Caco-2 (cell line): ENCODE measurements at regions of chr9 and their contacts with region 1.

Region 1: DNA sequence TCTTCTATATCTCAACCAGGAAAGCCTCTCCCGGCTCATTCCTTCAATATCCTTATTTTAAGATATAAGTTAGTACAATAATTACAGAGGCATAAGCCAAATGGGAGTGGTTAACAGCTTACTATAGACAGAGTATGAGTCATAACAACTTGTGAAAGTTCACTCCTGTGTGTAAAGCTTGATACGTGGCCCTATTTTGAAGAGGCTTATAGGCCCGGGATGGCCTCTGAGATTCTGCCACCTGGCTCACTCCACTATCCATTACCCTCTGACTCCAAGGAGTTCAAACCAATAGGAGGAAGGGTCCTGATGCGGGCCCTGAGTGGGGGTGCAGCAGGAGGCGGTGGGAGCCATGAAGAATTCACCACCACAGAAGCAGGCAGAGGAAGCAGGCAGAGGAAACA is 36.6 kb downstream of the B4GALT1 start:
- DNase-seq: no peak
- H3K4me3 ChIP-seq: no peak overlapping the region
- H3K4me3 Mint-ChIP-seq: peak overlapping the region; percentile 50
- H3K27ac Mint-ChIP-seq: peak overlapping the region; percentile 97
- H3K4me1 ChIP-seq: peaks cover 68% of the 10 kb centered on the region
- H3K4me1 Mint-ChIP-seq: peaks cover 59% of the 10 kb centered on the region
- H3K27me3 ChIP-seq: no peaks in the 10 kb centered on the region
- H3K27me3 Mint-ChIP-seq: no peaks in the 10 kb centered on the region
- CTCF ChIP-seq: no peak

Region 2: DNA sequence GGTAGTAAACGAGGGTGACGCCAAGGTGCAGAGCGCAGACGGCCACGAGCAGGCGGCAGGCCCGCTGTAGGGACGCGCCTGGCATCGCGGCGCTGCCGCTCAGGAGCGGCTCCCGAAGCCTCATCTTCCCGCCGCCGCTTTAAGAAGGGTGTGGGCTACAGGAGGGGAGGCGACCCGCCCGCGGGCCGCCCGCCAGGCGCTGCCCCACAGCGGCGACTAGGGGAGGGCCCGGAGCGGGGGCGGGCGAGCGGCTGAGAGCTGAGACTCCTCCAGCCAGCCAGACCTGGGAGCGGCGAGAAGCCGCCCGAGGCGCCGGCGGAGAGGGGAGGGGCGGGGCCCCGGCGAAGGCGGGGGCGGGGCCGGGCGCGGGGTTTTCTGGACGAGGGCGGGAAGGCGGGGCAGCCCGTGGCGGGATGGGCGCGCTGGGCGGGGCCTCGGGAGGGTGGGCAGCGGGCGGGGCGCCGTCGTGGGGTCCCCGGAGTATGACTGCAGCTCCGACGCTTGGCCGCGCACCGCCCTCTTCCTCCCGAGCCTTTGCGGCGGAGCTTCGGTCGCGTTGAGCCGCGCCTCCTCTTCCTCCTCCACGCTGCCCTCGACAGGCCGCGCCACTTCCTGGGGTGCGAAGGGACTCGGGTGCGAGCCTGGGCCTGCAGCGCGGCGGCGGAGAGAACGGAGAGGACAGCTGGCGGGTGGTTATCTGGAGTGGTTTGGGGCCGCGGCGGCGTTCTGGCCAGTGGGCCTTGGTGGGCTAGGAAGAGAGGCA is 36.7 kb after region 1 on chr9 and contains the start of gene B4GALT1:
- CTCF ChIA-PET with region 1: interaction called, 5 read pairs
- POLR2A ChIA-PET with region 1: interaction called, 8 read pairs
- intact Hi-C with region 1: loop called (anchors 1 kb)
- DNase-seq: peak; percentile 95 to 97
- H3K4me3 ChIP-seq: peak within 1 kb of the TSS; percentile 91
- H3K4me3 Mint-ChIP-seq: peak within 1 kb of the TSS; percentile 89
- H3K27ac Mint-ChIP-seq: peak within 1 kb of the TSS; percentile 98
- H3K4me1 ChIP-seq: peaks cover 64% of the 10 kb centered on the region
- H3K4me1 Mint-ChIP-seq: peaks cover 66% of the 10 kb centered on the region
- H3K27me3 ChIP-seq: no peaks in the 10 kb centered on the region
- H3K27me3 Mint-ChIP-seq: no peaks in the 10 kb centered on the region
- CTCF ChIP-seq: peak in 1 of 2 experiments; percentile 13
- total RNA-seq, gene B4GALT1: 104 and 121 TPM in 2 replicates

Region 3: GRCh38 chr9:33172256-33173238 is 42.0 kb after region 1 on chr9:
- CTCF ChIA-PET with region 1: interaction called, 5 read pairs
- POLR2A ChIA-PET with region 1: interaction called, 8 read pairs
- intact Hi-C with region 1: loop called (anchors 1 kb)
- DNase-seq: peak; percentile 72 to 82
- H3K4me3 ChIP-seq: no peak overlapping the region
- H3K4me3 Mint-ChIP-seq: peak overlapping the region; percentile 51
- H3K27ac Mint-ChIP-seq: peak overlapping the region; percentile 95
- H3K4me1 ChIP-seq: peaks cover 50% of the 10 kb centered on the region
- H3K4me1 Mint-ChIP-seq: peaks cover 49% of the 10 kb centered on the region
- H3K27me3 ChIP-seq: no peaks in the 10 kb centered on the region
- H3K27me3 Mint-ChIP-seq: no peaks in the 10 kb centered on the region
- CTCF ChIP-seq: no peak

Region 4: GRCh38 chr9:33178971-33179697 is 48.6 kb after region 1 on chr9:
- CTCF ChIA-PET with region 1: no interaction called
- POLR2A ChIA-PET with region 1: no interaction called
- intact Hi-C with region 1: loop called (anchors 1 kb)
- DNase-seq: peak in 1 of 2 experiments; percentile 51
- H3K4me3 ChIP-seq: no peak overlapping the region
- H3K4me3 Mint-ChIP-seq: no peak overlapping the region
- H3K27ac Mint-ChIP-seq: no peak overlapping the region
- H3K4me1 ChIP-seq: 0 out of 2 replicates have a peak, but pooled peaks cover 9% of the 10 kb centered on the region
- H3K4me1 Mint-ChIP-seq: peaks cover 6% of the 10 kb centered on the region
- H3K27me3 ChIP-seq: no peaks in the 10 kb centered on the region
- H3K27me3 Mint-ChIP-seq: no peaks in the 10 kb centered on the region
- CTCF ChIP-seq: no peak